Activated CD4-positive, alpha-beta T cell treated with anti-CD3 and anti-CD28 coated beads for 36 hours (primary cell): ENCODE measurements at regions of chr12 and their contacts with region 1.

Region 1: DNA sequence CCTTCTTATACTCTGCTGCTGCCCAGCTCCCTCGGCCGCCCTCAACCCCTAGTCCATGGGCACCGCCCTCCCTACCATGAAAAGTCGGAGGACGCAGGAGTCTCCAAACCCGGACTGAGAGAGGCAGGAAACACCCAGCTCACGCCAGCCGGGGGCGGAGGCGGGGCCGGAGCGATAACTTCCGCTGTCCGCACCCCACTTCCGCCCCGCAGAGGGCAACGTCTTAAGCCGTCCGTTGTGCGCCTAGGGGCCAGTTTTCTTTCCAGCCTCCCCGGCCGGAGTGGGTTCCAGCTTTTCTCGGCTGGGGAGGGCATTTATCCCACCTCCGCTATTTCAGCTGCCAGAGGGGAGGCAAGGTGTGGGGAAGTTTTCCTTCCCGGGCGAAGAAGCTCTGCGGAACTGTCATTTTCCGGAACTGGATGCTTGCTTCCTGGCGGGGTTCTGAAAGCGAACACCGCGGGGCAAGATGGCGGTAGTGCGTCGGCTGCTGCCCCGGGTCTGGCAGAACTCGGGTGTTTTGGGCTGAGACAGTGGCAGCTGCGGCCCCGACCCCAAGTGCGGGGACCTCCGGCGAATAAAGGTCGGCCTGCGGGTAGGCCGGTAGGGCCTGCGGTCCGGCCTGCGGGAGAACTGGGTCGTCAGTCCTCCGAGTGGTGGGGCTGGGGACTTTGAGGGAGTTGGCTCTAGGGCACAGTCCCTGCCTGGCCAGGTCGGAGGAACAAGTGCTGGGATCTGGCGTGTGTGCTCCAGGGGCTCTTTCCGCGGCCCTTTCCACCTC is at the starts of genes KCTD10 and UBE3B:
- DNase-seq: peak; percentile 92
- ATAC-seq: peak; percentile 97
- H3K4me3 Mint-ChIP-seq: peak within 1 kb of the TSS; percentile 95
- H3K27ac Mint-ChIP-seq: peak within 1 kb of the TSS; percentile 99
- H3K4me1 Mint-ChIP-seq: peaks cover 43% of the 10 kb centered on the region
- H3K27me3 Mint-ChIP-seq: no peaks in the 10 kb centered on the region
- total RNA-seq, gene KCTD10: 42.0 to 46.3 TPM
- total RNA-seq, gene UBE3B: 25.7 to 27.2 TPM

Region 2: GRCh38 chr12:109052414-109053323 is 424.7 kb before region 1 on chr12 and contains the start of gene USP30:
- CTCF ChIA-PET with region 1: no interaction called
- POLR2A ChIA-PET with region 1: no interaction called
- intact Hi-C with region 1: loop called in 1 of 2 experiments (anchors 1 kb)
- DNase-seq: peak; percentile 91
- ATAC-seq: peak; percentile 70
- H3K4me3 Mint-ChIP-seq: peak within 1 kb of the TSS; percentile 86
- H3K27ac Mint-ChIP-seq: peak within 1 kb of the TSS; percentile 97
- H3K4me1 Mint-ChIP-seq: peaks cover 6% of the 10 kb centered on the region
- H3K27me3 Mint-ChIP-seq: no peaks in the 10 kb centered on the region
- total RNA-seq, gene USP30: 9.2 to 14.5 TPM

Region 3: DNA sequence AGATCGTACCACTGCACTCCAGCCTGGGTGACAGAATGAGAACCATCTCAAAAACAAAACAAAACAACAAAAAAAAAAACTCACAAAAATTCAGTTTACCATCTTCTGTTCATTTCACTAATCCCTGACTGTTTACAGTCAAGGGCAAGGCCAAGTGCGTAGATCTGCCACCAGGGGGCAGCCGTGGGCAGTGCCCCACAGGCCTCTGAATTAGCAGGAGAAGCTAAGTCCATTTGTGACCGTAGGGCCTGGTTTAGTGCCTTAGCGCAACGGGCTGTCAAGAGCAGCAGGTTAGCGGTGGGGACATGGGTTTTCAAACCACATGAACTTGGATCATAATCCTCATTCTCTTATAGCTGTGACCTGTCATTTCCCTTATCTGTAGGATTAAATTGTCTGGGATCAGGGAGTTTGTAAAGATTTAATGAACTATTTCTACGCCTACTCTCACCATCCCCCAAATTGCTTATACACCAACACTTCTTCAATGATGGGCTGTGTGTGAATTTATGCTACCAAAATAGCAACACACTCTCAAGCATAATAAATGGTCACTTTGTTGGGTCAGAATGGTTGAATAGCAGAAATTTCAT is 49.2 kb before region 1 on chr12:
- CTCF ChIA-PET with region 1: interaction called, 10 read pairs
- POLR2A ChIA-PET with region 1: no interaction called
- intact Hi-C with region 1: loop called (anchors 2 to 5 kb)
- DNase-seq: peak; percentile 86
- ATAC-seq: peak; percentile 82
- H3K4me3 Mint-ChIP-seq: no peak overlapping the region
- H3K27ac Mint-ChIP-seq: no peak overlapping the region
- H3K4me1 Mint-ChIP-seq: peaks cover 2% of the 10 kb centered on the region
- H3K27me3 Mint-ChIP-seq: peaks cover 6% of the 10 kb centered on the region

Region 4: GRCh38 chr12:109606320-109607028 is 129.1 kb after region 1 on chr12:
- CTCF ChIA-PET with region 1: no interaction called
- POLR2A ChIA-PET with region 1: no interaction called
- intact Hi-C with region 1: no loop called
- DNase-seq: no peak
- ATAC-seq: no peak
- H3K4me3 Mint-ChIP-seq: no peak overlapping the region
- H3K27ac Mint-ChIP-seq: no peak overlapping the region
- H3K4me1 Mint-ChIP-seq: no peaks in the 10 kb centered on the region
- H3K27me3 Mint-ChIP-seq: peaks cover 10% of the 10 kb centered on the region

Region 5: DNA sequence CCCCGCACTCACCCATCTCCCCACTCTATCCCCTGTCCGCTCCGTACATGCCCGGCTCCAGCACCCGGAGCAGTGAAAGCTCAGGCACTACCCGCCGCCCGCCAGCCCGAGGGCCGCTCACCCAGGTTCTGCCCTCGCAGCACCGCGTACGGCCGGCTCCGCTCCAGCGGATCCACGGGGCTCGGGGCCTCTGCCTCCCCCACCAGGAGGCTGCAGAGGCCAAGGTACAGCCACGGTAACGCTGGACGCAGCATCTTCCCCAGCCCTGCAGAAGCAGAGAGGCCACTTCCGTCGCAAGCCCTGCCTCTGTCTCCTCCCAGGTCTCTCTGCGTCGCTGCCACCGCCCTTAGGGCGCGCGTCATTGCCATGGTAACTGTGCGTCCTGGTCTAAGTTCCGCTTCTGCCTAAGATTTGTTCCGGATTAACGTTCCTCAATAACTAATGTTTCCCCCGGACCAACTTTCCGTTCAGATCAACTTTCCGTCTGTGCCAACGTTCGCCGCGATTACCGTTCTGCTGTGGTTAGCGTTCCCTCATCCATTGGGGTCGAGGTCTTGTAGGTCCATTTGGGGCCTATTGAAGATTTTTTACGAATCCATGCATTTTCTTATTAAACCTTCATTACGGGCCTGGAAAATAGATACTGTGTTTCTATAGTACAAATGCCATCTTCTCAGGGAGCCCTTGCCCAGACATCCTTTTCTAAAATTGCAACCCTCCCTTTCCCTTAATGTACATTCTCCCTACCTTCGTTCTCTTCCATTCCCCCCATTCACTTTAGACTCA is 571.1 kb after region 1 on chr12 and contains the start of gene C12orf76:
- CTCF ChIA-PET with region 1: no interaction called
- POLR2A ChIA-PET with region 1: no interaction called
- intact Hi-C with region 1: loop called in 1 of 2 experiments (anchors 2 kb)
- DNase-seq: peak; percentile 95
- ATAC-seq: peak; percentile 100
- H3K4me3 Mint-ChIP-seq: peak within 1 kb of the TSS; percentile 78
- H3K27ac Mint-ChIP-seq: peak within 1 kb of the TSS; percentile 94
- H3K4me1 Mint-ChIP-seq: peaks cover 28% of the 10 kb centered on the region
- H3K27me3 Mint-ChIP-seq: no peaks in the 10 kb centered on the region
- total RNA-seq, gene C12orf76: 10.2 to 10.5 TPM